ENCODE measurements at regions of chr19 and their contacts with region 1.

Region 1: DNA sequence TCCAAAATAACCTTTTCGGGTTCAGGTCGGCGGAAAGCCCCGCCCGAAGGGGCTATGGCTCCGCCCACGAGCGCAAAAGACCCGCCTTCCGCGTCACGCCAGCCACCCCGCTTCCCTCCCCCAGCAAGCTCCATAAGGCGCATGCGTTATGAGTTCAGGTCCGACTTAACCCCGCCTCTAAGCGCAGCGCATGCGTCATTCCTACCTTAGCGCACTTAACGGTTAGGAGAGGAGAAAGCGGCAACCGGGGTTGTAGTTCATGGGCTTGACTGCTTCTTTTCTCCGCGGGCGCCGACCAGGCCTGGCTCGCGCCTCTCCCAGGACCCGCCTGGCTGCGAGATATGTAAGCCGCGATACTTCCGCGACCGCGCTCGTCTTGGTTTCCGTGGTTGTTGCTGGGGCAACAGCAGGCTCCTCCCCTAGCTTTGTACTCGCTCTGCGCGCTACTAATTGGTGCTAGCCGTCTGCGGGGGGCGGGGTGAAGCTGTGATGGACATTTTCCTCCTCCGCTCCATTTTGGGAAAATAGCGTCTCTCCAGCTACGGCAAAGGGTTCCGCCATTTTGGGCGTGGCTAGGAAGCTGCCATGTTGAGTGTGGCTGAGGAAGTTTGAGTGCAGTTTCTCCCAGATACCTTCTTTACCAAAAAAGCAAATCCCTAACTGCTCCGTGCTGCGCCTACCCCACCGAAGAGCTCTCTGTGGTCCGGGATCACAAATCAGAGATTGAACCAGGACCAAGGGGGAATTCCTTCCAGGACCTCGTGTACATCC is at the start of gene B9D2:
- DNase-seq: peak; percentile 96 to 99 (median 99)
- H3K4me3 ChIP-seq: peak within 1 kb of the TSS; percentile 95
- H3K4me3 Mint-ChIP-seq: peak within 1 kb of the TSS; percentile 87 to 98 (median 97)
- H3K27ac ChIP-seq: peak within 1 kb of the TSS; percentile 100
- H3K27ac Mint-ChIP-seq: peak within 1 kb of the TSS; percentile 99 to 100 (median 100)
- H3K4me1 ChIP-seq: peaks cover 22% of the 10 kb centered on the region
- H3K4me1 Mint-ChIP-seq: peaks cover 23 to 40% (median 26%) of the 10 kb centered on the region in 3 donors
- H3K27me3 ChIP-seq: no peaks in the 10 kb centered on the region
- H3K27me3 Mint-ChIP-seq: peaks cover 0 to 2% of the 10 kb centered on the region in 2 donors
- total RNA-seq, gene B9D2: 8.5 to 9.7 TPM

Region 2: DNA sequence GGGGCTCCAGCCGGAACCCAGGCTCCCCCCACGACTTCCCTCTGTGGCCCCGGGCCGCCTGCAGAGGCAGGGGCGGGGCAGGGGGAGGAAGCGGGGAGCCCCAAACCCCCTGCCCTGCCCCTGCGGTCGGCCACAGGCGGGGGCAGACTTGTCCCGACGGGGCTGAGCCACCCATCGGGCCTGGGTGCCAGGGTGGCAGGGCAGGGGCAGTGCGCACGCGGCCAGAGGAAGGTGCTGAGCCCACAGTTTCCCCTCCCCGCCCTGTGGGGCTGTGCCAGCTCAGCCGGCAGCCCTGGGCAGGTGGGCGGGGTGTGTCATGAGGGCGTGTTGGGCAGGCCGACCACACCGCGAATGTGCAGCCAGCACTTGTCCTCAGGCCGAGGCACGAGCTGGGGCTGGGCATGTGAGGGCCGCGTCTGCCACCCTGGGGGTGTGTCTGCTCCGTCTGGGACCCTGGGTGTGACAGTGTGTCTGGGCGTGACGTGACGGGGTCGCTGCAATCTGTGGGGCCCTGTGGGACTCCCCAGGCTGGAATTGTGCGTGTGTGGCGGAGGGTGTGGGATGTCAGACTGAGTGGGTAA is 36.3 kb before region 1 on chr19:
- CTCF ChIA-PET with region 1: interaction called, 9 read pairs
- POLR2A ChIA-PET with region 1: interaction called, 15 read pairs
- DNase-seq: peak; percentile 81 to 97 (median 92)
- H3K4me3 ChIP-seq: peak overlapping the region; percentile 64
- H3K4me3 Mint-ChIP-seq: peak overlapping the region; percentile 73 to 89 (median 80)
- H3K27ac ChIP-seq: peak overlapping the region; percentile 80
- H3K27ac Mint-ChIP-seq: peak overlapping the region; percentile 97 to 100 (median 100)
- H3K4me1 ChIP-seq: peaks cover 69% of the 10 kb centered on the region
- H3K4me1 Mint-ChIP-seq: peaks cover 68 to 82% (median 70%) of the 10 kb centered on the region in 3 donors
- H3K27me3 ChIP-seq: no peaks in the 10 kb centered on the region
- H3K27me3 Mint-ChIP-seq: peaks cover 0 to 9% of the 10 kb centered on the region in 2 donors

Region 3: DNA sequence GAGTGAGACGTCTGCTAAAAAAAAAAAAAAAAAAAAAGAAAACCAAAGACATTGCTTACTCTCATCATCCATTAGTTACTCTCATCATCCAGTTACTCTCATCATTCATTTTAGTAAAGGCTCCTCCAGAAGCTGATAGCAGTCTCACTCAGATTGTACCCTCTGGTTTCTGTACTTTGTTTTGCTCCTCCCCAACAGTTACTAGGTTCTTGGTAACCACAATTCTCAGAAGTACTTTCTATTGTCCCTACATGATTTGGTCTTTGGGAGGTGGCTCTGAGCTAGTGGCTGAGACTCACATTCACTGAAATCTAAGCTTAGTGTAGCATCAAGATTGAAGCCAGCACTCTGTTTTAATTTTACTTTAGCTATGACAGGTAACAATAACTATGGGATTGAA is 93.3 kb after region 1 on chr19:
- CTCF ChIA-PET with region 1: no interaction called
- POLR2A ChIA-PET with region 1: no interaction called
- DNase-seq: peak in 1 of 5 donors; percentile 45
- H3K4me3 ChIP-seq: no peak overlapping the region
- H3K4me3 Mint-ChIP-seq: peak overlapping the region in 1 of 7 donors; percentile 7
- H3K27ac ChIP-seq: no peak overlapping the region
- H3K27ac Mint-ChIP-seq: peak overlapping the region in 1 of 8 donors; percentile 74
- H3K4me1 ChIP-seq: peaks cover 20% of the 10 kb centered on the region
- H3K4me1 Mint-ChIP-seq: peaks cover 3 to 15% (median 14%) of the 10 kb centered on the region in 3 donors
- H3K27me3 ChIP-seq: no peaks in the 10 kb centered on the region
- H3K27me3 Mint-ChIP-seq: peaks cover 18 to 41% of the 10 kb centered on the region in 2 donors

Region 4: DNA sequence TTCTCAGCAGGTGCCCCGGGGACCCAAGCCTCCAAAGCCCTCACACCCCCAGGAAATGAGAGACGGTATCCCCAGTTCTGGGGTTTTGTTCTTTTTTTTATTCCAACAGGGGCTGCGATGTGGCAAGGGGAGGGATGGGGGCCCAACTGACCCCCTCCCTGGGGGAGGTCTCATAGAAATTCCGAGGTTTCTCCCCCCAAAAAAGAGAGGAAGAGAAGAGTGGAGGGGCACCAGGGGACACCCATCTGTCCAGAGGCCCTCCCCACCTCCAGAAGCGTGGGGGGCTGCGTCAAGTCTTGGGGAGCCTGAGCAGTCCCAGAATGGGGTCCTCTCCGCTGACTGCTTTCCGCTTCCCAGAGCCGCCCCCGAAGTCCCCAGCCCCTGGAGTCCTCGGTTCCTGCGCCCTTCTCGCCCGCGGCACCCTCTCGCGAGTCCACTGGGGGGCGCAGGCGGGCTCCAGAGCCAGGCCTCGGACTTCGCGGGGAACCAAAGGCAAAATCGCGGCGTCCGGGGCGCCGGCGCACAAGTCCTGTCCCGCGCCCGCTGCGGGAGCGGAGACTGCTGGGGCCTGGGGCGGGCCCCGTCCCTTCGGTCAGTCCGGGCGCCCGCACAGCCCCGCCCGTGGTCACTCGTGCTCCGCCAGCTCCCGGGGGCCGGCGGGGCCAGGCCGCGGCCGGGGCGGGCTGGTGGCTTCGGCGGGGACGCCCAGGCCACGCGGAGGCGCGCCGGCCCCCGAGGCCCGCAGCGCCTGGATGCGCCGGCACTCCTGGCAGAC is 634.5 kb after region 1 on chr19:
- CTCF ChIA-PET with region 1: no interaction called
- POLR2A ChIA-PET with region 1: no interaction called
- DNase-seq: peak in 2 of 5 donors; percentile 7 to 12
- H3K4me3 ChIP-seq: no peak overlapping the region
- H3K4me3 Mint-ChIP-seq: no peak overlapping the region
- H3K27ac ChIP-seq: no peak overlapping the region
- H3K27ac Mint-ChIP-seq: no peak overlapping the region
- H3K4me1 ChIP-seq: peaks cover 18% of the 10 kb centered on the region
- H3K4me1 Mint-ChIP-seq: peaks cover 32 to 39% (median 32%) of the 10 kb centered on the region in 3 donors
- H3K27me3 ChIP-seq: peaks cover 50% of the 10 kb centered on the region
- H3K27me3 Mint-ChIP-seq: peaks cover 55 to 72% of the 10 kb centered on the region in 2 donors

Measured in CD8-positive, alpha-beta memory T cell (primary cell).